ENCODE measurements at regions of chr18 and their contacts with region 1.

Region 1: GRCh38 chr18:1627494-1627893 is 722.8 kb downstream of the ADCYAP1 start:
- DNase-seq: no peak
- ATAC-seq: no peak
- H3K4me3 Mint-ChIP-seq: no peak overlapping the region
- H3K27ac Mint-ChIP-seq: no peak overlapping the region
- H3K4me1 Mint-ChIP-seq: no peaks in the 10 kb centered on the region
- H3K27me3 Mint-ChIP-seq: peaks cover 4% of the 10 kb centered on the region

Region 2: GRCh38 chr18:1708006-1708405 is 80.5 kb after region 1 on chr18:
- CTCF ChIA-PET with region 1: no interaction called
- POLR2A ChIA-PET with region 1: no interaction called
- intact Hi-C with region 1: loop called in 1 of 2 experiments (anchors 10 kb)
- DNase-seq: no peak
- ATAC-seq: no peak
- H3K4me3 Mint-ChIP-seq: no peak overlapping the region
- H3K27ac Mint-ChIP-seq: no peak overlapping the region
- H3K4me1 Mint-ChIP-seq: no peaks in the 10 kb centered on the region
- H3K27me3 Mint-ChIP-seq: no peaks in the 10 kb centered on the region

Region 3: GRCh38 chr18:1875219-1875618 is 247.7 kb after region 1 on chr18:
- CTCF ChIA-PET with region 1: no interaction called
- POLR2A ChIA-PET with region 1: no interaction called
- intact Hi-C with region 1: no loop called
- DNase-seq: no peak
- ATAC-seq: no peak
- H3K4me3 Mint-ChIP-seq: no peak overlapping the region
- H3K27ac Mint-ChIP-seq: no peak overlapping the region
- H3K4me1 Mint-ChIP-seq: no peaks in the 10 kb centered on the region
- H3K27me3 Mint-ChIP-seq: no peaks in the 10 kb centered on the region

Measured in activated CD4-positive, alpha-beta T cell treated with anti-CD3 and anti-CD28 coated beads for 36 hours (primary cell).